Panc1 (cell line): ENCODE measurements at regions of chr2 and their contacts with region 1.

Region 1: GRCh38 chr2:15645720-15646385 is 54.2 kb downstream of the DDX1 start:
- DNase-seq: no peak
- ATAC-seq: no peak
- H3K4me3 ChIP-seq: no peak overlapping the region
- H3K27ac ChIP-seq: no peak overlapping the region
- H3K4me1 ChIP-seq: no peaks in the 10 kb centered on the region
- H3K27me3 ChIP-seq: no peaks in the 10 kb centered on the region
- CTCF ChIP-seq: no peak

Region 2: GRCh38 chr2:15616850-15617777 is 28.7 kb before region 1 on chr2:
- CTCF ChIA-PET with region 1: no interaction called
- POLR2A ChIA-PET with region 1: interaction called, 10 read pairs
- in situ Hi-C with region 1: no loop called
- intact Hi-C with region 1: no loop called
- DNase-seq: no peak
- ATAC-seq: no peak
- H3K4me3 ChIP-seq: no peak overlapping the region
- H3K27ac ChIP-seq: no peak overlapping the region
- H3K4me1 ChIP-seq: no peaks in the 10 kb centered on the region
- H3K27me3 ChIP-seq: no peaks in the 10 kb centered on the region
- CTCF ChIP-seq: no peak

Region 3: DNA sequence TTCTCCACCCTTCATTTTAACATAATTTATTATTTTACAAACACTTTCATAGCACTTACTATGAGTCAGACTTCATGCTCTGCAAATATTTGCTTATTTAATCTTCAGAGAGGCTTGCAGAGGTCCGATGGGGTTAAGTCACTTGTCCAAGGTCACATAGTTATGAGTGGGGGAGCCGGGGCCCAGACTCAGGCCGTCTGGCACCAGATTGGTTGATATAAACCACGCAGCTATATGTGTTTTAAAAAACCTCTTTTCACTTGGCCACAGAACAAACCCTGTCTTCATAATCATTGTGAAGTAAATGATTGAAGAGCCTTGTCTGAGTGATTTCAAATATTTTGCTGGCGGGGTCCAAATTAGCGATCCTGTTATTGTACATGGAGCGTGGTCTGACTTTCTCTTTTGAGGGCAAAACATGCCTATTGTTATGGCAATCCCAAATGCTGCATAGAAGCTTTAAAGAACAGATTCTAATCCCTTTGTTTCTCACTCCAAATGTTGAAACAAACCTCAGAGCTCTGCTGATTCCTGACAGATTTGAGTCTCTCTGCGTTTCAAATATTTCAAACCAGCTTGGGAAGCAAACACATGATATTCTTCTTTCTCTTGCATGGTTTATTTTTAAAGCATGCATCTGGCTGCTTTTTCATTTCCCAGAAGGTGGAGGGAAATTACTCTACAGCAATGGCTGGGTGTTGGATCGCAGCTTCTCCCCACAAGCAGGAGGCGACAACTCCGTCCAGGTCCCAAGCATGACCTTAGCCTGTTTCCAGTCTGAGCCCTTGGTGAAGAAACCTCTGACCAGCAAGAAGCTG is 88.2 kb after region 1 on chr2:
- CTCF ChIA-PET with region 1: no interaction called
- POLR2A ChIA-PET with region 1: no interaction called
- in situ Hi-C with region 1: no loop called
- intact Hi-C with region 1: no loop called
- DNase-seq: no peak
- ATAC-seq: no peak
- H3K4me3 ChIP-seq: no peak overlapping the region
- H3K27ac ChIP-seq: no peak overlapping the region
- H3K4me1 ChIP-seq: 0 out of 2 replicates have a peak, but pooled peaks cover 8% of the 10 kb centered on the region
- H3K27me3 ChIP-seq: no peaks in the 10 kb centered on the region
- CTCF ChIP-seq: no peak